Activated B cell treated with CpG ODN at 0.5 μM for 24 hours (primary cell): ENCODE measurements at regions of chr3 and their contacts with region 1.

Region 1: DNA sequence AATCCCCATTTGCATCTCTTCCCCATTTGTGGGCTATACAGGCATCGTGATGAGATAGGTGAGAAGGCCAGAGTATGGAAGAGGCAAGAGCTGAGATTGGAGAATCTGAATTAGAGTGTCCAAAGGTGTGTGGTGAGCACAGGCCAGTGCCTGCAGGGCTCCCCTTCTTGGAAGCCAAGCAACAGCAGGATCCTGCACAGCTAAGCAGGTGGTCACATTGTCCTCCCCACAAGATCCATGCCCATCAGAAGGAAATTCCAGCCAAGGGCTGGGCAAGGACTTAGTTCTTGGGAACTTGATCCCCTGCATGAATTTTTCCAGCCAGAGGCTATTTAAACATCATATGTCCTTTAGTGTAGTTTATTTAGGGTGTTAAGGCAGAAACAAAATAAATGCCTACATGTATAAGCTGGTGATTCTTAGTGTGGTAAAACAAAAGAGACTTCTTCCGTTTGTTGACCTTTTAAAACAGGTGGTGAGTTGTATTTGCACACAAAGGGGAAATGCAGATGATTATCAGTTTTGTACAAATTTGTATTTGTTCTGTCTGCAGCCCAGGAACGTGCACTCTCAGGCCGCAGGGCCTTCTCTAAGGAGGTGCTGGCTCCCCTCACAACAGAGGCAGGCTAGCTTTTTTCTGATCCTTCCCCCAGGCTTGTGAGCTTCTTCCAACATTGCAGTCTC is 110.2 kb downstream of the PLCL2 start:
- DNase-seq: no peak
- ATAC-seq: no peak
- H3K4me3 Mint-ChIP-seq: no peak overlapping the region
- H3K27ac Mint-ChIP-seq: no peak overlapping the region
- H3K4me1 Mint-ChIP-seq: peaks cover 73% of the 10 kb centered on the region
- H3K27me3 Mint-ChIP-seq: no peaks in the 10 kb centered on the region
- CTCF ChIP-seq: no peak

Region 2: GRCh38 chr3:17032407-17033034 is 37.5 kb after region 1 on chr3:
- CTCF ChIA-PET with region 1: no interaction called
- POLR2A ChIA-PET with region 1: no interaction called
- intact Hi-C with region 1: loop called (anchors 5 kb)
- DNase-seq: no peak
- ATAC-seq: peak; percentile 31
- H3K4me3 Mint-ChIP-seq: no peak overlapping the region
- H3K27ac Mint-ChIP-seq: no peak overlapping the region
- H3K4me1 Mint-ChIP-seq: peaks cover 40% of the 10 kb centered on the region
- H3K27me3 Mint-ChIP-seq: no peaks in the 10 kb centered on the region
- CTCF ChIP-seq: no peak

Region 3: GRCh38 chr3:18679238-18679637 is 1684.2 kb after region 1 on chr3:
- CTCF ChIA-PET with region 1: no interaction called
- POLR2A ChIA-PET with region 1: interaction called, 10 read pairs
- intact Hi-C with region 1: no loop called
- DNase-seq: no peak
- ATAC-seq: no peak
- H3K4me3 Mint-ChIP-seq: no peak overlapping the region
- H3K27ac Mint-ChIP-seq: no peak overlapping the region
- H3K4me1 Mint-ChIP-seq: no peaks in the 10 kb centered on the region
- H3K27me3 Mint-ChIP-seq: no peaks in the 10 kb centered on the region
- CTCF ChIP-seq: no peak